ENCODE measurements at regions of chr17 and their contacts with region 1.

Region 1: DNA sequence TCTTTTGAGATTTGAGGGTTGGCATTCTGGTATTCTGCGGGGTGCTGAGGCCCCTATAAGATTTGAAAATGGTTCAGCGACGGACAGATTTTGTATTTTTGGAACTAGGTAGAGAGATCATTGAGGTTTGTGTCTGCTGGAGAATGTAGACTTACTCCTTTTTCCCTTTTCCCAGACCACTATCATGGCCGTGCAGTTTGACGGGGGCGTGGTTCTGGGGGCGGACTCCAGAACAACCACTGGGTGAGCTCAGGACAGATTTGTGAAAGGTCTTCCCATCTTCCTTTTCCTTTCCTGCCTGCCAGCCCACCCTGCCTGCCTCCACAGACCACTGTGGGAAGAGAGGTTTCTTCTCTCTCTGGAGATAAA is 573 bp downstream of the PSMB6 start:
- DNase-seq: no peak
- ATAC-seq: no peak
- H3K4me3 Mint-ChIP-seq: peak overlapping the region; percentile 100
- H3K27ac Mint-ChIP-seq: peak overlapping the region; percentile 97
- H3K4me1 Mint-ChIP-seq: peaks cover 20% of the 10 kb centered on the region
- H3K27me3 Mint-ChIP-seq: no peaks in the 10 kb centered on the region
- CTCF ChIP-seq: no peak

Region 2: DNA sequence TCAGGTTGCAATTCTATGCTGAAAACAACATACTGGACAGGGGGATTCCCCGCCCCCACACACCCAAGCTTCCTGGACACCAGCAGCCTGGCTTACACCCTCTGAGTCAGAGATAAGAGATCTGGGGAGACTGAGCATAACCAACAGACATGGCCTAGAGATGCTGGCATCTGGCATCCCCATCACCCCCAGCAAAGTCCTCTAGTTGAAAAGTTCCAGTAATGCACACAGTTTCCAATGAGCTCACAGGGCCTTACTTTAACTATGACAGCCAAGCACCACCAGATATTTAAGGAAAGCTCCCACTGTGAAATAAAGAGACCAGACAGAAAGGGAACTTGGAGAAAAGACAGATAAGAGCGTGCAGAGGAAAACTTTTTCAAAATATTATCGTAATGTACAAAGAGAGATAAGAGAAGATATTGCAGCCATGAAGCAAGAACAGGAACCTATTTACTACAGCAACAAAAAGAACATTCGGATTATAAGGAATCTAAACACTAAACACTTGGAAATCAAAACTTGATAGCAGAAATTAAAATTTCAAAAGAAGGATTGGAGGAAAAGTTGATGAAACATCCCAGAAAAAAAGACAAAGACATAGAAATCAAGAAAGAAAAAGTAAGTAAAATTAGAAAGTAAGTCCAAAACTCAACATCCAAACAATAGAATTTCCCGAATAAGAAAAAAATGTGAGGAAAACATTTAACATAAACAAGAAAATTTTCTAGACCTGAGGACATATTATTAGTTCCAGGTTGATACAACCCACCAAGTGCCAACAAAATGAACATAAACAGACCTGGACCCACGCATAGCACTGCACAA is 137.8 kb before region 1 on chr17:
- CTCF ChIA-PET with region 1: no interaction called
- POLR2A ChIA-PET with region 1: no interaction called
- intact Hi-C with region 1: no loop called
- DNase-seq: no peak
- ATAC-seq: no peak
- H3K4me3 Mint-ChIP-seq: no peak overlapping the region
- H3K27ac Mint-ChIP-seq: no peak overlapping the region
- H3K4me1 Mint-ChIP-seq: peaks cover 2% of the 10 kb centered on the region
- H3K27me3 Mint-ChIP-seq: peaks cover 15% of the 10 kb centered on the region
- CTCF ChIP-seq: no peak

Region 3: GRCh38 chr17:4721203-4722135 is 75.1 kb before region 1 on chr17:
- CTCF ChIA-PET with region 1: no interaction called
- POLR2A ChIA-PET with region 1: no interaction called
- intact Hi-C with region 1: no loop called
- DNase-seq: no peak
- ATAC-seq: peak; percentile 40
- H3K4me3 Mint-ChIP-seq: no peak overlapping the region
- H3K27ac Mint-ChIP-seq: peak overlapping the region; percentile 21
- H3K4me1 Mint-ChIP-seq: peaks cover 5% of the 10 kb centered on the region
- H3K27me3 Mint-ChIP-seq: no peaks in the 10 kb centered on the region
- CTCF ChIP-seq: no peak

Region 4: GRCh38 chr17:4782652-4783051 is 13.9 kb before region 1 on chr17:
- CTCF ChIA-PET with region 1: no interaction called
- POLR2A ChIA-PET with region 1: no interaction called
- intact Hi-C with region 1: no loop called
- DNase-seq: no peak
- ATAC-seq: no peak
- H3K4me3 Mint-ChIP-seq: no peak overlapping the region
- H3K27ac Mint-ChIP-seq: no peak overlapping the region
- H3K4me1 Mint-ChIP-seq: peaks cover 10% of the 10 kb centered on the region
- H3K27me3 Mint-ChIP-seq: peaks cover 37% of the 10 kb centered on the region
- CTCF ChIP-seq: no peak

Region 5: DNA sequence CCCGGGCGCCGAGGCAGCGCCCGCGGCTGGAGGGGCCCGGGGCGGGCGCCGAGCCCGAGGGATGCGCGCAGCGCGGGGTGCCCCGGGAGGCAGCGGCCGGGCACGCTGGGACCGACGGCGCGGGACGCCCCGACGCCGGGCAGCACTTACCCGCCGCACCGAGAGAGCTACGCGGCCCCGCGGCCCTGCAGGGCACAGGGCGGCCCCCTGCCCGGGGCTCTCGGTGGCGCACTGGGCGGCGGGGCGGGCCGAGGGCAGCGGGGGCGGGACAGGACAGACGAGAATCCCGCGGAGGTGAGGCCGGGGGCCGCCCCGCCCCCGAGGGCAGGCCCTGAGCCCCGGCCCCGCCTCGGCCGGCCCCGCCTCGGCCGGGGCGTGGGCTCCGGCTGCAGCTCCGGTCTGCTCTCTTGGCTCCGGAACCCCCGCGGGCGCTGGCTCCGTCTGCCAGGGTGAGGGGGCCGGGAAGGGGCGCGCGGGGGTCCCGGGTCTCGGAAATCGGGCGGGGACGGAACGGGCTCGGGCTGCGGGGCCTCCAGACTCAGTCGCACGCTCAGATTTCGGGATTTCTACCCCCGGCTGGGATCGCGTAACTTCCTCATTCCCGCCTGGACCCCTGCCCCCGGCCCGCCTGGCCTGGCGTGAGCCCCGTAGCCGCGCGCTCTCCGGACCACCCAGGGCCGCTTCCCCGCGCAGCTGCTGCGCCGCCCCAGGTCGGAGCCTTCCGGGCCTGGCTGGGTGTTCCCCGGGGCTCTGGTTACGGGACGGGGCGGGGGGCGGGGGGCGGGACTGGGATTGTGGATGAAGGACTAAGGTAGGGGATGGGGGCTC is 10.5 kb after region 1 on chr17 and contains the start of gene PLD2:
- CTCF ChIA-PET with region 1: no interaction called
- POLR2A ChIA-PET with region 1: interaction called, 31 read pairs
- intact Hi-C with region 1: loop called (anchors 1 kb)
- DNase-seq: peak; percentile 90
- ATAC-seq: peak; percentile 99
- H3K4me3 Mint-ChIP-seq: peak within 1 kb of the TSS; percentile 83
- H3K27ac Mint-ChIP-seq: peak within 1 kb of the TSS; percentile 56
- H3K4me1 Mint-ChIP-seq: peaks cover 17% of the 10 kb centered on the region
- H3K27me3 Mint-ChIP-seq: no peaks in the 10 kb centered on the region
- CTCF ChIP-seq: no peak
- total RNA-seq, gene PLD2: 49.9 and 54.3 TPM in 2 replicates

Region 6: DNA sequence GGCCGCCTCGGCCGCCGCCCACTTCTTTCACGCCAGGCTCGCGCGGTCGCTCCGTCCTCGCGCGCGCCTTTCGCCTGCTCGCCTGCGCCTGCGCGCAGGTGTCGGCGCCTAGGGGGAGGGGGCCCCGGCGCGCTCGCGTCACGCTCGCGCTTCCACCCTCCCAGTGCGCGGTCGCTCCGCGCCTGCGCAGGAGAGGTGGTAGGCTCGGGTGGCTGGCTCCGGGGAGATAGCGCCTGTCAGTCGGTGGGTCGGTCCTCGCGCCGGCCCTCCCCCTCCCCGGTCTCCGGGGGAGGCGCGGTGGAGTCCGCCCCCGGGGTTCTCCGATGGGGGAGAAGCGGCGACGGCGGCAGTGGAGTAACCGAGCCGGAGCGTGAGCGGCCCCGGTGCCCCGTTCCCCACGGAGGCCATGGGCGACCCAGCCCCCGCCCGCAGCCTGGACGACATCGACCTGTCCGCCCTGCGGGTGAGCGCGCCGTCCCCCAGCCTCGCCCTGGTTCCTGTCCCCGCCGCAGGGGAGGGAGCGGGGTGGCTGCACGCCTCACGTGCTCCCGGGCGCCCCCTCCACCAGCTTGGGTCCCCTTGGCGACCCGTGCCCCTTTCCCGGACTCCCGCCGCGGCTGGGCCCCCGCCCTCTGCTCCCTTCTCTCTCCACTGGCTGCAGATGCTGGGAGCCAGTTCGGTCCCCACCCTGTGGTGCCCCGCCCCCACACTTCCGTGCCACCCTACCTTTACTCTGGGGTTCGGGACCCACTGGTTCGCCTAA is 36.8 kb after region 1 on chr17 and contains the start of gene MINK1:
- CTCF ChIA-PET with region 1: no interaction called
- POLR2A ChIA-PET with region 1: interaction called, 3 read pairs
- intact Hi-C with region 1: loop called (anchors 1 kb)
- DNase-seq: peak; percentile 88
- ATAC-seq: peak; percentile 95
- H3K4me3 Mint-ChIP-seq: peak within 1 kb of the TSS; percentile 94
- H3K27ac Mint-ChIP-seq: peak within 1 kb of the TSS; percentile 96
- H3K4me1 Mint-ChIP-seq: peaks cover 33% of the 10 kb centered on the region
- H3K27me3 Mint-ChIP-seq: no peaks in the 10 kb centered on the region
- CTCF ChIP-seq: no peak
- total RNA-seq, gene MINK1: 61.3 and 65.3 TPM in 2 replicates